Heart left ventricle (tissue), 16 donors: ENCODE measurements at regions of chr17 and their contacts with region 1.

Region 1: GRCh38 chr17:34443619-34444469 is 80.8 kb upstream of the CCL1 start:
- DNase-seq: peak in 3 of 5 donors; percentile 21 to 44 (median 43)
- ATAC-seq: peak; percentile 57 to 69 (median 64)
- H3K4me3 ChIP-seq: no peak overlapping the region
- H3K27ac ChIP-seq: peak overlapping the region in 1 of 12 donors; percentile 46
- H3K4me1 ChIP-seq: peaks cover 0 to 13% (median 0%) of the 10 kb centered on the region in 12 donors
- H3K27me3 ChIP-seq: peaks cover 0 to 17% (median 3%) of the 10 kb centered on the region in 9 donors
- CTCF ChIP-seq: peak in 11 of 12 donors; percentile 16 to 57 (median 39)
- POLR2A ChIP-seq: no peak

Region 2: GRCh38 chr17:34163646-34164045 is 280.2 kb before region 1 on chr17:
- intact Hi-C with region 1: no loop called
- DNase-seq: peak in 1 of 5 donors; percentile 28
- ATAC-seq: peak in 3 of 4 donors; percentile 65 to 77 (median 72)
- H3K4me3 ChIP-seq: no peak overlapping the region
- H3K27ac ChIP-seq: no peak overlapping the region
- H3K4me1 ChIP-seq: peaks cover 0 to 7% (median 0%) of the 10 kb centered on the region in 12 donors
- H3K27me3 ChIP-seq: peaks cover 0 to 51% (median 12%) of the 10 kb centered on the region in 9 donors
- CTCF ChIP-seq: peak; percentile 26 to 60 (median 42)
- POLR2A ChIP-seq: no peak

Region 3: GRCh38 chr17:34357398-34357797 is 86.4 kb before region 1 on chr17:
- intact Hi-C with region 1: no loop called
- DNase-seq: no peak
- ATAC-seq: no peak
- H3K4me3 ChIP-seq: peak overlapping the region in 1 of 12 donors; percentile 31
- H3K27ac ChIP-seq: no peak overlapping the region
- H3K4me1 ChIP-seq: peaks cover 0 to 29% (median 3%) of the 10 kb centered on the region in 12 donors
- H3K27me3 ChIP-seq: peaks cover 0 to 3% (median 0%) of the 10 kb centered on the region in 9 donors
- CTCF ChIP-seq: no peak
- POLR2A ChIP-seq: no peak

Region 4: GRCh38 chr17:34465789-34466188 is 21.9 kb after region 1 on chr17:
- intact Hi-C with region 1: loop called in 1 of 10 experiments (anchors 2 kb)
- DNase-seq: no peak
- ATAC-seq: peak in 1 of 4 donors; percentile 29
- H3K4me3 ChIP-seq: no peak overlapping the region
- H3K27ac ChIP-seq: no peak overlapping the region
- H3K4me1 ChIP-seq: no peaks in the 10 kb centered on the region
- H3K27me3 ChIP-seq: peaks cover 0 to 20% (median 3%) of the 10 kb centered on the region in 9 donors
- CTCF ChIP-seq: no peak
- POLR2A ChIP-seq: no peak

Region 5: GRCh38 chr17:34519282-34519681 is 75.4 kb after region 1 on chr17:
- intact Hi-C with region 1: loop called in 2 of 10 experiments (anchors 5 kb)
- DNase-seq: no peak
- ATAC-seq: no peak
- H3K4me3 ChIP-seq: no peak overlapping the region
- H3K27ac ChIP-seq: no peak overlapping the region
- H3K4me1 ChIP-seq: no peaks in the 10 kb centered on the region
- H3K27me3 ChIP-seq: peaks cover 0 to 34% (median 13%) of the 10 kb centered on the region in 9 donors
- CTCF ChIP-seq: peak in 11 of 12 donors; percentile 12 to 55 (median 40)
- POLR2A ChIP-seq: no peak

Region 6: DNA sequence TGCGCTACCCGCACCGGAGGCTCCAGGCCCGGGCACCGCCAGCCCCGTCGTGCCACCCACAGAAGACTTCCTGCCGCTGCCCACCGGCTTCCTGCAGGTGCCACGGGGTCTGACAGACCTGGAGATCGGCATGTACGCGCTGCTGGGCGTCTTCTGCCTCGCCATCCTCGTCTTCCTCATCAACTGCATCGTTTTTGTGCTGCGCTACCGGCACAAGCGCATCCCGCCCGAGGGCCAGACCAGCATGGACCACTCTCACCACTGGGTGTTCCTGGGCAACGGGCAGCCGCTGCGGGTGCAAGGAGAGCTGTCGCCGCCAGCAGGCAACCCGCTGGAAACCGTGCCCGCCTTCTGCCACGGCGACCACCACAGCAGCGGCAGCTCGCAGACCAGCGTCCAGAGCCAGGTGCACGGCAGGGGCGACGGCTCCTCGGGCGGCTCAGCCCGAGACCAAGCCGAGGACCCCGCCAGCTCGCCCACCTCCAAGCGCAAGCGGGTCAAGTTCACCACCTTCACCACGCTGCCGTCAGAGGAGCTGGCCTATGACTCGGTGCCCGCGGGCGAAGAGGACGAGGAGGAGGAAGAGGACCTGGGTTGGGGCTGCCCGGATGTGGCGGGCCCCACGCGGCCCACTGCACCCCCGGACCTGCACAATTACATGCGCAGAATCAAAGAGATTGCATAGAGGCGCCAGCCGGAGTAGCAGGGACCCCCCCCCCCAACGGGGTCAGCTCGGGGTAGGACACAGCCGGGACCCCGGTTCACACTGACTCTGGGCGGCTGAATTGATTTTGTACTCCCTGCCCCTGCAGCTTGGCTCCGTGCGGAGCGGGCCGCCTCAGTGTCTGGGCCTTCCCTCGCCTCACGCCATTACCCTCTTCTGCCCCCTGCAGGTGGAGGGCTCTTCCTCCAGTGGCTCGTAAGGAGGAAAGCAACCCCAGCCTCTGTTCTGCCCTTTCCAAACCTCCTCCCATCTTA is 194.0 kb after region 1 on chr17:
- intact Hi-C with region 1: loop called in 2 of 10 experiments (anchors 5 kb)
- DNase-seq: peak; percentile 70 to 87 (median 75)
- ATAC-seq: peak; percentile 77 to 97 (median 92)
- H3K4me3 ChIP-seq: peak overlapping the region; percentile 21 to 57 (median 44)
- H3K27ac ChIP-seq: no peak overlapping the region
- H3K4me1 ChIP-seq: peaks cover 0 to 12% (median 5%) of the 10 kb centered on the region in 12 donors
- H3K27me3 ChIP-seq: peaks cover 0 to 72% (median 21%) of the 10 kb centered on the region in 9 donors
- CTCF ChIP-seq: peak; percentile 68 to 90 (median 78)
- POLR2A ChIP-seq: no peak

Region 7: GRCh38 chr17:34892461-34893249 is 448.8 kb after region 1 on chr17:
- intact Hi-C with region 1: loop called in 2 of 10 experiments (anchors 10 kb)
- DNase-seq: no peak
- ATAC-seq: peak in 3 of 4 donors; percentile 55 to 64 (median 61)
- H3K4me3 ChIP-seq: no peak overlapping the region
- H3K27ac ChIP-seq: no peak overlapping the region
- H3K4me1 ChIP-seq: no peaks in the 10 kb centered on the region
- H3K27me3 ChIP-seq: peaks cover 0 to 74% (median 16%) of the 10 kb centered on the region in 9 donors
- CTCF ChIP-seq: peak in 11 of 12 donors; percentile 11 to 57 (median 41)
- POLR2A ChIP-seq: no peak

Region 8: GRCh38 chr17:34980681-34981537 is 537.1 kb after region 1 on chr17:
- intact Hi-C with region 1: loop called in 1 of 10 experiments (anchors 10 kb)
- DNase-seq: peak; percentile 78 to 89 (median 80)
- ATAC-seq: peak; percentile 65 to 96 (median 92)
- H3K4me3 ChIP-seq: peak overlapping the region; percentile 69 to 98 (median 92)
- H3K27ac ChIP-seq: peak overlapping the region; percentile 95 to 100 (median 98)
- H3K4me1 ChIP-seq: peaks cover 0 to 28% (median 18%) of the 10 kb centered on the region in 12 donors
- H3K27me3 ChIP-seq: no peaks in the 10 kb centered on the region
- CTCF ChIP-seq: peak in 9 of 12 donors; percentile 11 to 56 (median 39)
- POLR2A ChIP-seq: peak in 1 of 2 donors; percentile 42

Region 9: GRCh38 chr17:35119368-35120165 is 675.7 kb after region 1 on chr17 and contains the start of gene RAD51D:
- intact Hi-C with region 1: loop called in 2 of 10 experiments (anchors 2 to 10 kb)
- DNase-seq: peak; percentile 67 to 88 (median 73)
- ATAC-seq: peak; percentile 62 to 98 (median 95)
- H3K4me3 ChIP-seq: peak within 1 kb of the TSS; percentile 51 to 99 (median 90)
- H3K27ac ChIP-seq: peak within 1 kb of the TSS in 11 of 12 donors; percentile 8 to 86 (median 75)
- H3K4me1 ChIP-seq: peaks cover 0 to 20% (median 10%) of the 10 kb centered on the region in 12 donors
- H3K27me3 ChIP-seq: no peaks in the 10 kb centered on the region
- CTCF ChIP-seq: peak; percentile 67 to 98 (median 94)
- POLR2A ChIP-seq: peak in 1 of 2 donors; percentile 39
- total RNA-seq, gene RAD51D: 2.7 to 9.2 (median 5.0) TPM